ENCODE measurements at regions of chr9 and their contacts with region 1.

Region 1: GRCh38 chr9:122827761-122828093 is 661 bp downstream of the PDCL start:
- DNase-seq: no peak
- ATAC-seq: no peak
- H3K4me3 ChIP-seq: peak overlapping the region; percentile 93 to 99
- H3K4me3 Mint-ChIP-seq: peak overlapping the region; percentile 96
- H3K27ac ChIP-seq: peak overlapping the region; percentile 90 to 96
- H3K27ac Mint-ChIP-seq: peak overlapping the region; percentile 95
- H3K4me1 ChIP-seq: peaks cover 23% of the 10 kb centered on the region
- H3K4me1 Mint-ChIP-seq: peaks cover 48% of the 10 kb centered on the region
- H3K27me3 ChIP-seq: no peaks in the 10 kb centered on the region
- H3K27me3 Mint-ChIP-seq: no peaks in the 10 kb centered on the region
- CTCF ChIP-seq: no peak

Region 2: DNA sequence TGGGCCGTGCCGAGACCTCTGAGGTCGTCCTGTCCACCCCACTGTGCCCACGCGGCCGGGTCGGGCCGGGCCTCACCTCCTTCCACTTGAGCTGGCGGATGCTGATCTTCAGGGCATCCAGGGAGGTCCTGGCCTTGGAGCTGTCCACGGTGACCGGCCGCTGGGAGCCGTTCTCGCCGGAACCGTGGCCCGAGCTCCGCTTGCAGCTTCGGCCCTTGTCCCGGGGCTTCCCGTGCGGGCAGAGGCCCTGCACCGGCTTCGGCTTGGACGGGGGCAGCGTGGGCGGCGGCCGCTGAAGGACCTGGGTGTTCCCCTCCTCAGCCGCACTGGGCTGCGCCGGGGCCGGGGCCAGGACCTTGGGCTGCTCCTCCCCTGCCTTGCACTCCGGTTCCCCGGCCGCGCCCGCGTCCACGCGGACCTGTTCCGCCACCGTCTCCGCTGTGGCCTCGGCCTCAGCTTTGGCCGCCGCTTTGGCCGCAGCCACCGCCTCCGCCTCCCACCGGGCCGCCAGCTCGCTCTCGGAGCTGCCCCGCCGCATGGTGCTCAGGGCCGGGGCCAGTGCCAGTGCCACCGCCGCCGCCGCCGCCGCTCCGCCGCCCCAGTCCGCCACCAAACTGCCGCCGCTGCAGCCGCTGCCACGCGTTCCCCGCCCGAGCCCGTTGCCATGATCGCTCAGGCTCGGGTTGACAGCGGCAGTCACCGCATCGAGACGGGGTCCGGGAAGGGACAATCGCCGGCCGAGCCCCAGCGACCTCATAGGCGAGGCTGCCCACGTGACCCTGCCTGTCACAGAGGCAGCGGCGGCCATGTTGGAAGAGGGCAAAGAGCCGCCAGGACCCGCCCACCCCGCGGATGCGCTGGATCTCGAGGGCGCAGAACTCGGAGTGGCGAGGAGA is 734.9 kb before region 1 on chr9 and contains the start of gene TTLL11:
- CTCF ChIA-PET with region 1: no interaction called
- POLR2A ChIA-PET with region 1: no interaction called
- intact Hi-C with region 1: loop called in 1 of 2 experiments (anchors 1 kb)
- DNase-seq: peak; percentile 93 to 97 (median 97)
- ATAC-seq: peak; percentile 94
- H3K4me3 ChIP-seq: peak within 1 kb of the TSS; percentile 51 to 77
- H3K4me3 Mint-ChIP-seq: peak within 1 kb of the TSS; percentile 92
- H3K27ac ChIP-seq: peak within 1 kb of the TSS in 1 of 2 experiments; percentile 36
- H3K27ac Mint-ChIP-seq: peak within 1 kb of the TSS; percentile 58
- H3K4me1 ChIP-seq: peaks cover 24% of the 10 kb centered on the region
- H3K4me1 Mint-ChIP-seq: peaks cover 52% of the 10 kb centered on the region
- H3K27me3 ChIP-seq: no peaks in the 10 kb centered on the region
- H3K27me3 Mint-ChIP-seq: no peaks in the 10 kb centered on the region
- CTCF ChIP-seq: no peak
- total RNA-seq, gene TTLL11: 0.68 to 1.00 TPM

Region 3: GRCh38 chr9:122264360-122265148 is 563.2 kb before region 1 on chr9 and contains the starts of genes MRRF and RBM18:
- CTCF ChIA-PET with region 1: no interaction called
- POLR2A ChIA-PET with region 1: no interaction called
- intact Hi-C with region 1: loop called (anchors 1 to 5 kb)
- DNase-seq: peak; percentile 80 to 95 (median 87)
- ATAC-seq: peak; percentile 84
- H3K4me3 ChIP-seq: peak within 1 kb of the TSS; percentile 79 to 91
- H3K4me3 Mint-ChIP-seq: peak within 1 kb of the TSS; percentile 95
- H3K27ac ChIP-seq: peak within 1 kb of the TSS; percentile 95 to 99
- H3K27ac Mint-ChIP-seq: peak within 1 kb of the TSS; percentile 98
- H3K4me1 ChIP-seq: peaks cover 38% of the 10 kb centered on the region
- H3K4me1 Mint-ChIP-seq: peaks cover 60% of the 10 kb centered on the region
- H3K27me3 ChIP-seq: no peaks in the 10 kb centered on the region
- H3K27me3 Mint-ChIP-seq: no peaks in the 10 kb centered on the region
- CTCF ChIP-seq: no peak
- total RNA-seq, gene MRRF: 22.9 to 23.2 TPM
- total RNA-seq, gene RBM18: 34.0 to 38.9 TPM

Region 4: GRCh38 chr9:122846371-122846940 is 18.7 kb after region 1 on chr9:
- CTCF ChIA-PET with region 1: interaction called, 3 read pairs
- POLR2A ChIA-PET with region 1: interaction called, 3 read pairs
- intact Hi-C with region 1: loop called (anchors 1 to 2 kb)
- DNase-seq: peak in 3 of 9 experiments; percentile 22 to 62 (median 26)
- ATAC-seq: peak; percentile 70
- H3K4me3 ChIP-seq: no peak overlapping the region
- H3K4me3 Mint-ChIP-seq: no peak overlapping the region
- H3K27ac ChIP-seq: peak overlapping the region in 1 of 2 experiments; percentile 44
- H3K27ac Mint-ChIP-seq: peak overlapping the region; percentile 86
- H3K4me1 ChIP-seq: peaks cover 43% of the 10 kb centered on the region
- H3K4me1 Mint-ChIP-seq: peaks cover 43% of the 10 kb centered on the region
- H3K27me3 ChIP-seq: no peaks in the 10 kb centered on the region
- H3K27me3 Mint-ChIP-seq: no peaks in the 10 kb centered on the region
- CTCF ChIP-seq: no peak

Region 5: DNA sequence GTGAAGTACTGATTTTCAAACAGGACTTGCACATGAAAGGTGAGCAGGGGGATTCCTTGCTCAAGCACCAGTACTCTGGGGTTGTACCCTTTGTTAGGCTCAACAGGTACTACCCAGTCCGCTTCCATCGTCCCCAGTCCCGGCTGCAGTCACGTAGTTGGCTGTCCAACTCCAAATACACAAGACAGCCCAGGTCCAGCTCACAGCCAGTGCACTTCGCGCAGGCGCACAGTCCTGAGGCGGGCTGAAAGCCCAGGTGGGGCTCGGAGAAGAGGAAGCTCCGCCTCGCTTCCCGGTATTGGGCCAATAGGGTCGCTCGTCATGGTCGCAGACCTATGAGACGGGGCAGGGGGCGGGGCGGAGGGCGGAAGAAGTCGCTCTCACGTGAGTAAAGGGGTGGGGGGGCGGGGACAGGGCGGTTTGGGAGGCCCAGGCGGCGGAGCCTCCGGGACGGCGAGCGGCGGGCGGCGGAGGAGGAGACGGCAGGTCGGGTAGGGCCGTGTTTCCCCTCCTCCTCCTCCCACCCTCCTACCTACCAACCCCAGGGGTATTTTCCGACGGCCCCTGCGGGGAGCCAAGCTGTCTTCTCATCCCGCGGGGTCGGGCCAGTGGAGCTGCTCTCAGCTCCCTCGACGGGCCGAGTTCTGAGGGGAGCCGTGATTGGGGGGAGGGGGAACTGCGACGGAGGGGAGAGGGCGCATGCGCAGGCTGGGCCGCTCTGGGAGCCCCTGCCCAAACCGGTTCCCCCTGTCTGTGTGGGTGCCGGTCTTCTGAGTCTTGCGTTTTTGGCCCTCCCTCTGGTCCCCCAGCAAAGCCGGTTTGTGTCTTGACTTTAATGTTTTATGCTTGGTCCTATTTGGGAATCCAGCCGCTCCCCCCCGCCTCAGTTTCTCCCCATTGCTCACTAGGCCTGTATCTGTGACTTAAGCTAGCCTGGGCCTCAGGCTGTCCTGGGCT is 113.2 kb after region 1 on chr9 and contains the start of gene RABGAP1:
- CTCF ChIA-PET with region 1: no interaction called
- POLR2A ChIA-PET with region 1: no interaction called
- intact Hi-C with region 1: loop called in 1 of 2 experiments (anchors 2 kb)
- DNase-seq: peak; percentile 95 to 99 (median 99)
- ATAC-seq: peak; percentile 98
- H3K4me3 ChIP-seq: peak within 1 kb of the TSS; percentile 79 to 98
- H3K4me3 Mint-ChIP-seq: peak within 1 kb of the TSS; percentile 97
- H3K27ac ChIP-seq: peak within 1 kb of the TSS; percentile 64 to 88
- H3K27ac Mint-ChIP-seq: peak within 1 kb of the TSS; percentile 92
- H3K4me1 ChIP-seq: peaks cover 18% of the 10 kb centered on the region
- H3K4me1 Mint-ChIP-seq: peaks cover 44% of the 10 kb centered on the region
- H3K27me3 ChIP-seq: no peaks in the 10 kb centered on the region
- H3K27me3 Mint-ChIP-seq: no peaks in the 10 kb centered on the region
- CTCF ChIP-seq: no peak
- total RNA-seq, gene RABGAP1: 20.2 to 21.0 TPM

Region 6: DNA sequence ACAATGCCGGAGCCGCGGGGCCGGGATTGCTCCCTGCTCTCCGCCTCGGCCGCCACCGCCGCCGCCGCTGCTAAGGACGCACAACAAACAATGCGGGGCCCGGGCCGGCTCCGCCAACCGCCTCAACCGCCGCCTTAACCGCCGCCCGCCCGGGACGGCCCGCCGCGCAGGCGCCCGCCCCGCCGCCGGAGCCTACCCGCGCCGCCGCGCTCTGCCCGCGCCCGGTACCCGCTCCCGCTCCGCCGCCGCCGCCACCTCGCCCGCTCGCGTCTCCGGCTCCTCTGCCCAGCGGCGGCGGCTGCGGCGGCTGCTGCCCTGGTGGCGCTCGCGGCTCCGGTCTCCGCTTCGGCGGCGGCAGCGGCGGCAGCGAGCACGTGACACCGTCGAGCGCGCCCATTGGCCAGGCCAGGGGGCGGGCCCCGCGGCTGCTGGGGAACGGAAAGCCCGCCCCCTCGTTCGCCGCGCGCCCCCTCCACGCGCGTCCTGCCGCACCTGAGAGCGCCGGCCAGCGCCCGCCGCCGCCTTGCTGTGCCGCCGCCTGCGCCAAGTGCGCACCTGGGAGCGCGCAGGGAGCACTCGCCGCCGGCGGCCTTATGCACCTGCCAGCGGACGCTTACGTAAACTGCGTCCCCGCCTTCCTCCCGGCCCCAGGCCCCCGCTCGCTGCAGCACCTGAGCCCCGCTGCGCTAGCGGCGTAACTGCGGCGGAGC is 440.7 kb after region 1 on chr9 and contains the start of gene STRBP:
- CTCF ChIA-PET with region 1: no interaction called
- POLR2A ChIA-PET with region 1: no interaction called
- intact Hi-C with region 1: loop called in 1 of 2 experiments (anchors 10 kb)
- DNase-seq: peak; percentile 87 to 96 (median 92)
- ATAC-seq: peak; percentile 89
- H3K4me3 ChIP-seq: peak within 1 kb of the TSS; percentile 72 to 88
- H3K4me3 Mint-ChIP-seq: peak within 1 kb of the TSS; percentile 79
- H3K27ac ChIP-seq: peak within 1 kb of the TSS; percentile 55 to 73
- H3K27ac Mint-ChIP-seq: peak within 1 kb of the TSS; percentile 67
- H3K4me1 ChIP-seq: peaks cover 19% of the 10 kb centered on the region
- H3K4me1 Mint-ChIP-seq: peaks cover 43% of the 10 kb centered on the region
- H3K27me3 ChIP-seq: no peaks in the 10 kb centered on the region
- H3K27me3 Mint-ChIP-seq: no peaks in the 10 kb centered on the region
- CTCF ChIP-seq: no peak
- total RNA-seq, gene STRBP: 10.2 to 12.6 TPM

Region 7: DNA sequence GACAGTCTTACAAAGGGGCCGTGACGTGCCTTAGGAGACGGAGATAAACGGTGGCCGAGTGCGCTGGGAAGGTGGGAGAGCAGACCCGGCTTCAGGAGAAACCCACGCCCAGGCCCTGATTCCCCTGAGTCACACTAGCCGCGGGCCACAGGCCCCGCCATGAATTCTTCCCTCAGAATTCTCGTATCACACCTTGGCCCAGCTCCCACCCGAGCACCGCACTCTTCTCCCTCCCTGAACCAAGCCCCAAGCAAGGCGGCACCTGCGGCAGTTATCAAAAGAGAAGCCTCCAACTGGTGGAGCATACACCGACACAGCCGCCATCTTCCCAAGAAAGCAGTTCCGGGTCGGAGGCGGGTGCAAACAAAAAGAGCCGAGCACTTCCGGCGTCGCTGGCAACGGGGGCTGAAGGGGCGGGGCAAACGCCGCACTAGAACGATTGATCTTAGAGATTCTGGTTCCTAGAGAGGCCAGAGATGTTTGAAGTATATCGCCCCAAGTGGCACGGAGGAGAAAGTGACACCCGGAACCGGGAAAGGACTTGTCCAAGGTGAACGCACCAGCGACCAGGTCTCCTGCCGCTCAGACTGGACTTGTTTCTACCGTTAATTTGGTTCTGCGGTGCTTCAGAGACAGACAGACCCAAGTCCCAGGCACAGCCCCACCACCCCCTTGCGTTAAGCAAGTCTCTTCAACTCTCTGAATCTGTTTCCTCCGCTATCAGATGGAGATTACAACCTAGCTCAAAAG is 1587.5 kb after region 1 on chr9 and contains the start of gene PSMB7:
- CTCF ChIA-PET with region 1: no interaction called
- POLR2A ChIA-PET with region 1: no interaction called
- intact Hi-C with region 1: loop called in 1 of 2 experiments (anchors 10 kb)
- DNase-seq: peak; percentile 94 to 98 (median 98)
- ATAC-seq: peak; percentile 95
- H3K4me3 ChIP-seq: peak within 1 kb of the TSS; percentile 66 to 87
- H3K4me3 Mint-ChIP-seq: peak within 1 kb of the TSS; percentile 98
- H3K27ac ChIP-seq: peak within 1 kb of the TSS; percentile 61 to 74
- H3K27ac Mint-ChIP-seq: peak within 1 kb of the TSS; percentile 96
- H3K4me1 ChIP-seq: peaks cover 11% of the 10 kb centered on the region
- H3K4me1 Mint-ChIP-seq: peaks cover 39% of the 10 kb centered on the region
- H3K27me3 ChIP-seq: no peaks in the 10 kb centered on the region
- H3K27me3 Mint-ChIP-seq: no peaks in the 10 kb centered on the region
- CTCF ChIP-seq: peak; percentile 95
- total RNA-seq, gene PSMB7: 71.0 to 71.5 TPM